ENCODE measurements at regions of chr19 and their contacts with region 1.

Region 1: GRCh38 chr19:46614114-46614722 is 10.7 kb downstream of the PTGIR start:
- DNase-seq: no peak
- H3K4me3 ChIP-seq: no peak overlapping the region
- H3K27ac ChIP-seq: no peak overlapping the region
- H3K27me3 ChIP-seq: no peaks in the 10 kb centered on the region
- CTCF ChIP-seq: peak; percentile 87

Region 2: DNA sequence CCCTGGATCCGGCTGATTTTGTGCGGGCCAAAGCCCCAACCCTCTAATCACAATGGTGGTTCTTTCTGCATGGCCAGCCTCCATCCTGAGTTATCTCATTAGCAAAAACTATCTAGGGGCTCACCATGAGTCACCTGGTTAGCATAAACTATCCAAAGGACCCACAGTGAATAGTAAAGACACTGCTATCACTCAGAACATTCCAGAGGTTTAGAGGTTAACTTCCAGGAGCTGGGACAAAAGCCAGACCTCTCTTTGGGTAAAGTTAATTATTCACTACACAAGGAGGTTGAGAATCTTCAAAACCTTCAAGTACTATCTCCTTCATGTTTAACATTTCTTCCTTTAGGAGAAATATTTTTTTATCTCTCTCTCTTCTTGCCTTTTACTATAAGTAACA is 286.1 kb before region 1 on chr19:
- CTCF ChIA-PET with region 1: no interaction called
- POLR2A ChIA-PET with region 1: no interaction called
- DNase-seq: no peak
- H3K4me3 ChIP-seq: no peak overlapping the region
- H3K27ac ChIP-seq: no peak overlapping the region
- H3K27me3 ChIP-seq: peaks cover 2% of the 10 kb centered on the region
- CTCF ChIP-seq: no peak

Region 3: GRCh38 chr19:46600384-46601317 is 13.6 kb before region 1 on chr19:
- CTCF ChIA-PET with region 1: interaction called, 20 read pairs
- POLR2A ChIA-PET with region 1: interaction called, 4 read pairs
- DNase-seq: peak; percentile 97
- H3K4me3 ChIP-seq: peak overlapping the region; percentile 94
- H3K27ac ChIP-seq: peak overlapping the region; percentile 99
- H3K27me3 ChIP-seq: no peaks in the 10 kb centered on the region
- CTCF ChIP-seq: no peak

Region 4: DNA sequence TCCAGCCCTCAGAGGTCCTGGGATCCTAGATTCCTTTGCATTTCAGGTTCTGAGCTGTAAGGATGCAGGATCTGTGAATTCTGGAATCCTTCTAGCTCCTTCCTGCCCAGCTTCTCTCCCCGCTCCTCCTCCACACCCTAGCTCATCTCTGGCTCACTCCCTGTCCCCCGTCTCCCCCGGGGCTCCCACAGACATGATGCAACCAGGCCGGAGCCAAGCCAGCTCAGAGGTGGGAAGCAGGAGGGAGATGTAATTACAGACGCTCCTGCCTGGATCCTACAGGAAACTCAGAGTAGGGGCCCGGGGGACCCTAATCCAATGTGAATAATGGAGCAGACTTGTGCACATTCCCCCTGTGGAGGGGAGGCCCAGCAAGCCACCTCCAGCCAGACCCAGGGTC is 17.3 kb after region 1 on chr19:
- CTCF ChIA-PET with region 1: interaction called, 13 read pairs
- POLR2A ChIA-PET with region 1: interaction called, 6 read pairs
- DNase-seq: no peak
- H3K4me3 ChIP-seq: no peak overlapping the region
- H3K27ac ChIP-seq: no peak overlapping the region
- H3K27me3 ChIP-seq: peaks cover 7% of the 10 kb centered on the region
- CTCF ChIP-seq: no peak

Region 5: GRCh38 chr19:46654621-46655152 is 40.5 kb after region 1 on chr19:
- CTCF ChIA-PET with region 1: interaction called, 13 read pairs
- POLR2A ChIA-PET with region 1: interaction called, 5 read pairs
- DNase-seq: no peak
- H3K4me3 ChIP-seq: no peak overlapping the region
- H3K27ac ChIP-seq: no peak overlapping the region
- H3K27me3 ChIP-seq: no peaks in the 10 kb centered on the region
- CTCF ChIP-seq: no peak

Region 6: DNA sequence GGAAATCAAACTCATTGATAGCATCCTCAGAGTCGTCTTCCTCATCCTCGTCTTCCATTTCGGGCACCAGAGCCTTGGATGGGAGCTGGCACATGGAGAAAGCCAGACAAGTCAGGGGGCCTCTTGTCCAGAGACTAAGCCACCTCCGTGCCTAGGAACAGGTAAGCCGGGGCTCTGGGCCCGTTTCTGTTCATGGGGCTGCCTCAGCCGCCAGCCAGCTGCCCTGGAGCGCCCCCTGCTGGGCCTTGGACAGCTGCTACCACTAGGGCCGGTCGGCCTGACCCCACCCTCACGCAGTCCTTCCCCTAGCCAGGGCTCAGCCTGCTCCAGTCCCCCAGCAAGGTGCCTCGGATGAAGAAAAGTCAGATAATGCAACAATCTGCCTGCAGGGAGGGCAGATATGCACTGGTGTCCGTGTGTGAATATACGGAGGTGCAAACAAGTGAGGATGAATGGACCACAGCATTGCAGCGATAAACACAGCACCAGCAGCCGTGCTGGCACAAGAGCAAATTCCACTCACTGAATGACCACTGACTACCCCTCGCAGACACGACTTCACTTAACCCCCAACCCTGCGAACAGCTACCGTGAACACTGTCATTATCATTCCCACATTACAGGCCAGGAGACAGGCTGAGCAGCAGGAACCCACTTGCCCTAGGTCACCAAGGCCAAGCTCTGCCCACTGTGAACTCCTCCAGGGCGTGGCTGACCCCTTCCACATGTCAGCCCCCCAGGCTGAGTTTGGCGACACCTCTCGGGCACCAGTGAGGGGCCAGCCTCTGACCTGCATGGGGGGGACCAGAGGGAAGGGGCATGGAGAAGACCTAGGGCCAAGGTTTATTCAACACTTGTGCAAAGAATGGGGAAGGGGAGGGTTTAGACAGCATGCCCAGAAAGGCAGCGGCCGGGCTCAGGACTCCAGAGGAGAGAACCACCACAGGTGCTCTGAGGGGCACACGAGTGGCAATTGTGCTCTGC is 114.8 kb after region 1 on chr19:
- CTCF ChIA-PET with region 1: interaction called, 10 read pairs
- POLR2A ChIA-PET with region 1: interaction called, 3 read pairs
- DNase-seq: no peak
- H3K4me3 ChIP-seq: no peak overlapping the region
- H3K27ac ChIP-seq: peak overlapping the region; percentile 11
- H3K27me3 ChIP-seq: no peaks in the 10 kb centered on the region
- CTCF ChIP-seq: peak; percentile 86

Region 7: DNA sequence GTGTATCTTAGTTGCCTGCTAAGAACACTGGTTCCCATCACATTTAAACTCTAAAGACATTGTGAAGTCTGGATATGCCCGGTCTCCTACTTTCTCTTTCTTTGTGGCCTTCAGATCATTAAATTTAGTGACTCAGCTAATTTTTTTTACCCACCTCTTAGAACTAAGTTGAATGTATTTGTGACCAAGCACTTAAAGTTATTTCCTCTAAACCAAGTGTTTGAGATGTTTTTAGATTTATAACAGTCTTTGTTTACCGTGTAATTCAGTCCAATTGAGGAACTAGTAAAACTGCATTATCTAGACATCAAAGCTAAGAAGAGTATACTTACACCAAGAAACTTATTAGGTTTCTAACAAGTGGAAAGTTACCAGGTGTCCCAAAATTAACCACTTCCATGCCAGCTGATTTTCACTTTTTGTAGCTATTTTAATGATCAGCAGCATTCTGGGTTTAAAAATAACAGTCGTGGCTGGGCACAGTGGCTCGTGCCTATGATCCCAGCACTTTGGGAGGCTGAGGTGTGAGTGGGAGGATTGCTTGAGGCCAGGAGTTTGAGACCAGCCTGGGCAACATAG is 299.7 kb after region 1 on chr19:
- CTCF ChIA-PET with region 1: no interaction called
- POLR2A ChIA-PET with region 1: no interaction called
- DNase-seq: no peak
- H3K4me3 ChIP-seq: no peak overlapping the region
- H3K27ac ChIP-seq: peak overlapping the region; percentile 25
- H3K27me3 ChIP-seq: no peaks in the 10 kb centered on the region
- CTCF ChIP-seq: no peak

Measured in AG04450 (cell line).